ENCODE measurements at regions of chr12 and their contacts with region 1.

Region 1: GRCh38 chr12:47963340-47964040 is at the start of gene TMEM106C:
- DNase-seq: peak; percentile 94
- ATAC-seq: peak; percentile 94
- H3K4me3 ChIP-seq: peak within 1 kb of the TSS; percentile 86
- H3K27ac ChIP-seq: no peak within 1 kb of the TSS
- H3K4me1 ChIP-seq: peaks cover 16% of the 10 kb centered on the region
- H3K27me3 ChIP-seq: no peaks in the 10 kb centered on the region
- CTCF ChIP-seq: peak; percentile 92
- total RNA-seq, gene TMEM106C: 114 and 166 TPM in 2 replicates

Region 2: DNA sequence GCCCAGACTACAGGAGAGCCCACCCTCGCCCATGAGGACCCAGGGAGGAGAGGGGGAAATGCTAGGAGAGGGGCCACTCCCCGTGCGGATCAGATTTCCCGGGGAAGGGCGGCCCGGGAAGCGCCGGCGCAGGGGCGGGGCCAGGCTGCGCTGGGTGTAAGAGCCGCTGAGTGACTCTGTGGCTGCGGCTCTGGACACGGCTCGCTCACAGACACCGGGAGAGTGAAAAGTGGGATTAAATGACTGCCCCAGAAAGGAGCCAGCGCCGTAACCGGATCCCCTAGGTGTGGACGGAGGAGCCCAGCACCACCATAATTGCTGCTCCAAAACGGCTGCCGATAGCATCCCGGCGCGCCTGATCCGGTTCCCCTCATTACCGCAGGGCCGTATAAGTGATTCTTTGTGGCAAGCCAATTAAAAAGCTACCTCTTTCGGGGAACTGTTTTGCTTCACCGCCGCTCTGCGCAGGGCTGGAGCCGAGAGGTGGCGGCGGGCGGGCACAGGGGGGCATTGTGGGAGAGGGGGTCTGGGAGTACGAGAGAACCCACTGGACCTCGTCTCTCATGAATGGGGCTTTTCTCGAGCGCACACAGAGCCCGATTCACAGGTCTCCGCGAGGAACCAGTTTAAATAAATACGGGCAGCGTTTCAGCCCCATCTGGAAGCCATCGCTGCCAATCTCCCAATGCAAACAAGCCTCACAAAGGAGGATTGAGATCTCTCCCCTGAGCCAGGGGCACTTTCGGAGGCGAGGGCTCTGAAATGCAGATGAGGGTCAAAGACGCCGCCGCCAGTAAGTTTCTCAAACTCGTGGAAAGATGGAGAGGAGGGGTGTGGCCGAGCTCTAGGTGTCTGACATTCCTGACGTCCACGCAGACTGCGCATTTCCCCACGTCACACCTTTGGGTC is 38.3 kb after region 1 on chr12:
- CTCF ChIA-PET with region 1: no interaction called
- POLR2A ChIA-PET with region 1: interaction called, 4 read pairs
- intact Hi-C with region 1: loop called (anchors 5 kb)
- DNase-seq: peak; percentile 58
- ATAC-seq: peak; percentile 78
- H3K4me3 ChIP-seq: peak overlapping the region; percentile 72
- H3K27ac ChIP-seq: peak overlapping the region; percentile 51
- H3K4me1 ChIP-seq: peaks cover 45% of the 10 kb centered on the region
- H3K27me3 ChIP-seq: peaks cover 37% of the 10 kb centered on the region
- CTCF ChIP-seq: no peak

Region 3: GRCh38 chr12:48021485-48022179 is 58.1 kb after region 1 on chr12:
- CTCF ChIA-PET with region 1: interaction called, 3 read pairs
- POLR2A ChIA-PET with region 1: no interaction called
- intact Hi-C with region 1: loop called (anchors 5 kb)
- DNase-seq: peak; percentile 98
- ATAC-seq: peak; percentile 93
- H3K4me3 ChIP-seq: no peak overlapping the region
- H3K27ac ChIP-seq: peak overlapping the region; percentile 72
- H3K4me1 ChIP-seq: peaks cover 33% of the 10 kb centered on the region
- H3K27me3 ChIP-seq: no peaks in the 10 kb centered on the region
- CTCF ChIP-seq: no peak

Region 4: DNA sequence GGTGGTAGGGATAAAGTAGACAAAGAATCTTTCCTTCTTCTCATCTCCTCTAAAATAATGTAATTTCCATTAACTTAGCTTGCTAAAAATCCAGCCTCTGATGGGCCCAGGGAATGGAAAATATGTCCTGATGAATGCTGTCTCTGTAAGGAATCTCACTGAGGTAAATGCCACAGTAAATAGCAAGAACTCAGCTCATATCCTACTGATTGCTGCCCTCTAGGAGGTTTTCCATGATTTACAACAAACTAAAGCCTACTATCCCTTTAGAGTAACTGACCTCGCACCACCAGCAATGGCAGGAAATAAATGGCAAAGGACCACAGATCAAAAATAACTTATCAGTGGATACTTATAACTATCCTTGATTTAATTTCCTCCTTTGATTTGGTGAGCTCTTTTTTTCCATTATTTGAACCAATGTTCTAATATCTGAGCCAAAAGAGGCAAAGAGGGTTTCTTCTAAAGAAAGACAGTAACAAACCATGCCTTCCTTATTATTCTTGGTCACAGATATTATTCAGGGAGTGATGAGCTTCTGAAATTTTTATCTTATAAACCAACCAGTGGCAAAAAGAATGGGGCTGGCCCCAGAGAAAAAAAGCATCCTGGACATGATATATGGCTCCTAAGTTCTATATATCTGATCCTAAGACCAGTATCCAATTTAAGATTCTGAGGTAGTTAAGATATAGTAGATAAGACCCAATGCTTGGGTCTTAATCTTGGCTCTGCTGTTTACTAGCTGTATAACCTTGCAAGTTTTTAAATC is 98.6 kb after region 1 on chr12:
- CTCF ChIA-PET with region 1: no interaction called
- POLR2A ChIA-PET with region 1: no interaction called
- intact Hi-C with region 1: loop called (anchors 1 kb)
- DNase-seq: peak; percentile 47
- ATAC-seq: peak; percentile 53
- H3K4me3 ChIP-seq: no peak overlapping the region
- H3K27ac ChIP-seq: no peak overlapping the region
- H3K4me1 ChIP-seq: no peaks in the 10 kb centered on the region
- H3K27me3 ChIP-seq: no peaks in the 10 kb centered on the region
- CTCF ChIP-seq: peak; percentile 54

Region 5: DNA sequence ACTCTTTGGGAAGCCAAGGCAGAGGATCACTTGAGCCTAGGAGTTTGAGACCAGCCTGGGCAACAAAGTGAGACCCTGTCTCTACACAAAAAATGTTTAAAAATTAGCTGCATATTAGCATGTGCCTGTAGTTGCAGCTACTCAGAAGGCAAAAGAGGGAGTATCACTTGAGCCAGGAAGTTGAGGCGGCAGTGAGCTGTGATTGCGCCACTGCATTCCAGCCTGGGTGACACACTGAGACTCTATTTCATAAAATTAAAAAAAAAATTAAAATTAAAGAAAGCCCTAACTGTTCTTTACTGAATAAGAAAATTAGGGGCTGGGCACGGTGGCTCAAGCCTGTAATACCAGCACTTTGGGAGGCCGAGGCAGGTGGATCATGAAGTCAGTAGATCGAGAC is 115.4 kb after region 1 on chr12:
- CTCF ChIA-PET with region 1: no interaction called
- POLR2A ChIA-PET with region 1: no interaction called
- intact Hi-C with region 1: no loop called
- DNase-seq: no peak
- ATAC-seq: no peak
- H3K4me3 ChIP-seq: no peak overlapping the region
- H3K27ac ChIP-seq: no peak overlapping the region
- H3K4me1 ChIP-seq: no peaks in the 10 kb centered on the region
- H3K27me3 ChIP-seq: no peaks in the 10 kb centered on the region
- CTCF ChIP-seq: no peak

Region 6: DNA sequence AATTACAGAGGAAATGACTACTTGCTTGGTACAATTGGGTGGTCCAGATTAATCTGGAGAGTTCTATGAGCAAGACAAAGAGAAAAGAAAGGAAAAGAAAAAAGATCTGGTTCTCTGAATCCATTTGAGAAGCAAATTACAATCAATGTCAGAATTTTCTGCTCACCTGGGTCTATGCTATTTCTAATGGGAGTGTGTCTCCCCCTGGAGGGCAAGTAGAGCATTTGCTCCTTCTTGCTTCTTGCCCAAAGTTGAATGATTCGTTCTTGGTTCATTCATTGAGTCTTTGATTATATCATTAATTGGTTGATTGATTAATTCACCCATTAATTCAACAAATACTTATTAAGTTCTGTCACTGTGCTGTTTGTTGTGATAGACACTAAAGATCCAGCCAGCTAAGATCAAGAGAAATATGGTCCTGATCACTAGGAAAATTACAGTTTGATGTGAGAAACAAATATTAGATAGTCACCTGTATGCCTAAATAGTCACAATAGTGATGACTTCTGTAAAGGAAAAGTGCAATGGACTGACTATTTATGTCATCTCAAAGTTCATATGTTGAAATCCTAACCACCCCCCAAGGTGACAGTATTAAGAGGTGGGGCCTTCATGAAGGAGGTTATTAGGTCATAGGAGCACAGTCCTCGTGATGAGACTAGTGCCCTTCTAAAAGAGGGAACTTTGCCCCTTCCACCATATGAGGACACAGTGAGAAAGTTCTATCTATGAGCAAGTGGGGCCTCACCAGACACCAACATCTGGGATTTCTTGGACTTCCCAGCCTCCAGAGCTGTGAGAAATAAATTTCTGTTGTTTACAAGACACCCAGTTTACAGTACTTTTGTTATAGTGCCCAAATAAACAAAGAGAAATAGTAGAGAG is 201.8 kb after region 1 on chr12:
- CTCF ChIA-PET with region 1: no interaction called
- POLR2A ChIA-PET with region 1: no interaction called
- intact Hi-C with region 1: loop called (anchors 2 kb)
- DNase-seq: peak; percentile 69
- ATAC-seq: peak; percentile 51
- H3K4me3 ChIP-seq: no peak overlapping the region
- H3K27ac ChIP-seq: no peak overlapping the region
- H3K4me1 ChIP-seq: no peaks in the 10 kb centered on the region
- H3K27me3 ChIP-seq: no peaks in the 10 kb centered on the region
- CTCF ChIP-seq: peak; percentile 93